Activated CD8-positive, alpha-beta memory T cell treated with anti-CD3 and anti-CD28 coated beads, Interleukin-2, amount 10 ng/mL, durations not matched to agents 7 days and 5 days (primary cell): ENCODE measurements at regions of chr9 and their contacts with region 1.

Region 1: DNA sequence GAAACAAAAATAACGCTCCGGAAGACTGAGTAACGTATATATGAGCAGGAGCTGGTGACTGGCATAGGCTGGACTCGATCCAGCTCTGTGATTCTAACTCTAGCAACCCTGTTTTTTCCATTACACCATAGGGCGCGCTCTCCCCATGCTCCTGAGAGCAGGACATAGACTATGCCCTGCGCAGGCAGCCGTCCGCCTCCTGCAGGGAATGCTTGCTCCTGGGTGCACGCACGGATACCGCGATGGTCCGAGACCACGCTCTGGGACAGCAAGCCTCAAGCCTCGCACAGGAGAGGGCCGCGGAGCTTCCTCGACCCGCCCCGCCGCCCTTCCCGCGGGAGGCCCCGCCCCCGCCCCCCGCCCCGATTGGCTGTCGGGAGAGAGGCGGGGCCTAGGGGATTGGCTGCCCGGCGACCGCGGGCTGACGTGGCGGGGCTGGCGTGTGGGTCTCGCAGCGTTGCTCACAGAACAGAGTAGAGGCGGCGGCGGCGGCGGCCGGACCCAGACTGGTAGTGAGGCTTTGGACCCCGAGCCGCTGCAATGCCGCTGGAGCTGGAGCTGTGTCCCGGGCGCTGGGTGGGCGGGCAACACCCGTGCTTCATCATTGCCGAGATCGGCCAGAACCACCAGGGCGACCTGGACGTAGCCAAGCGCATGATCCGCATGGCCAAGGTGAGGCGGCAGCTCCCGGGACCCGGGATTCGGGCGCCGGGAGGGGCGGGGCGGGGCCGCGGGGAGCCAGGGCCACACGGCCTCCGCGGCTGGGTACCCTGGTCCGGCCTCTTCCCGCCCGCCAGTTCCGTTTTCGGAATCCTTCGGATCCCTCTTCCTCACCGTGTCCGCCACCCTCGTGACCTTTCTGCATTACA is at the start of gene NANS:
- DNase-seq: peak; percentile 96
- ATAC-seq: peak; percentile 96
- H3K4me3 Mint-ChIP-seq: peak within 1 kb of the TSS; percentile 92
- H3K27ac Mint-ChIP-seq: peak within 1 kb of the TSS; percentile 95
- H3K4me1 Mint-ChIP-seq: peaks cover 43% of the 10 kb centered on the region
- H3K27me3 Mint-ChIP-seq: no peaks in the 10 kb centered on the region
- total RNA-seq, gene NANS: 35.5 to 47.8 TPM

Region 2: DNA sequence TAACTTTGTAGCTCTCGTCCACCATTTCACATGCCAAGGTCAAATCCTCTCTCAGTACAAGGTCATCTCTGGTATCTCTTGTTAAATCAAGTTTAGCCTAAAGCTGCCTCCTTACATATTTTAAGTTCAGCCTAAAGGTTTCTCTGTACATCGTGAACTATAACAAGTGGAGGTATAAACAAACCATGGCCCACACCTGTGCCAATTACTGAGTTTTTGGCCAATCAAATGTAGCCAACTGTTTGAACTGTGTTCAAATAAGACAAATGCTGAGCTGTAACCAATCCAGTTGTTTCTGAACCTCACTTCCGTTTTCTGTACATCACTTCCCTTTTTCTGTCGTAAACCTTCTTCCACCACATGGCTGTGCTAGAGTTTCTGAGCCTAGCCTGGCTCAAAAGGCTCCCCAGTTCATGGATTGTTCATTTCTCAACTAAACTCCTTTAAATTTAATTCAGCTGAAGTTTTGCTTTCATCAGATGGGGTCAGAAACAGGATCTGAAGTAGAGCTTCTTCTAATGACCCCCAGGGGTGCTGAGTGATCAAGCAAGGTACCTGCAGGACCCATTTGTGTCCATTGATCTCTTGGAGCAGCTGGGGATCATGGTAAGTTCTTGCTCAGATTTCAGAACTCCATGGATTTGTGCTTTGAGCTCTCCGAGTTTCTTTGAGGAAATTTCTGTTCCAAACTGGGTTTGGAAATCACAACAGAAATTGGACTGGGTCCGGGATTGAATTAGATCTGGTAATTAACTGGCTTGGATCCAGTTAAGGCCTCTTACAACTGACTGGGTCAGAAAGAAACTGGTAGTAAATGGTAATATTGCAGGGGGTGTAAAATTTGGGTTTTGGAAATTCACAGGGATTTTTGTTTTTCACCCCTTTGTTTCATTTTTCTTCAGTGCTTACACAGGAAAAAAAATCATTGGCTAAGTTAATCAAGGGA is 11.0 kb before region 1 on chr9:
- CTCF ChIA-PET with region 1: interaction called, 14 read pairs
- DNase-seq: peak; percentile 61
- ATAC-seq: peak; percentile 96
- H3K4me3 Mint-ChIP-seq: peak overlapping the region; percentile 83
- H3K27ac Mint-ChIP-seq: peak overlapping the region; percentile 83
- H3K4me1 Mint-ChIP-seq: peaks cover 39% of the 10 kb centered on the region
- H3K27me3 Mint-ChIP-seq: no peaks in the 10 kb centered on the region

Region 3: GRCh38 chr9:98097836-98098235 is 41.3 kb after region 1 on chr9:
- CTCF ChIA-PET with region 1: no interaction called
- DNase-seq: peak; percentile 66
- ATAC-seq: no peak
- H3K4me3 Mint-ChIP-seq: no peak overlapping the region
- H3K27ac Mint-ChIP-seq: peak overlapping the region; percentile 64
- H3K4me1 Mint-ChIP-seq: peaks cover 54% of the 10 kb centered on the region
- H3K27me3 Mint-ChIP-seq: no peaks in the 10 kb centered on the region